Kidney (tissue), 22 donors: ENCODE measurements at regions of chr11 and their contacts with region 1.

Region 1: DNA sequence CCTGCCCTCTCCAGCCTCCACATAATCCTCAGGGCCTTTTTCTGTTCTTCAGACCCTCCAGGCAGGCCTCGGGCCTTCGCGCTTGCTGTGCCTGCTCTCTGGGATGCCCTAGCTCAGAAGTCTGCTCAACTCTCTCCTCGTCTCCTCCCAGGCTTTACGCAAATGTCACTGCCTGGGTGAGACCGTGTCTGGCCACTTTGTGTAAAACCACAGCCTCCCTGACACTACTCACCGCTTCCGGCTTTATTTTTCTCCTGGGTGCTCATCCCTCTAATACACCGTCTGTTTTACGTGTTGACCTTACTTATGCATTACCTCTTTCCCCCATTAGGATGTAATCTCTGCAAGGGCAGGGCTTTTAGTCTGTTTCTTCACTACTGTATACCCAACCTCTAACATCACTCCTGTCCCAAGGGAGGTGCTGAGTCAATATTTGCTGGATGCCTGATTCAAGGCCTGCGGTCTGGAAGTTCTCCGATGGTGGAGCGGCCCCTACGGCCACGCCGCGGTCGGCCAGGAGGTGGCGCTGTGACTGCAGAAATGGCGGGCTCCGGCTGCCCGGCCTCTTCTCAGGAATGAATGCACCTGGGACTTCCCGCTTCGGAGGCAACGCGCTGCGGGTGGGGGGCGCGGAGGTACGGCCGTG is 58.2 kb upstream of the THY1 start:
- DNase-seq: peak; percentile 73 to 90 (median 80)
- H3K4me3 ChIP-seq: peak overlapping the region in 1 of 3 donors; percentile 15
- H3K27ac ChIP-seq: no peak overlapping the region
- H3K4me1 ChIP-seq: no peaks in the 10 kb centered on the region
- H3K27me3 ChIP-seq: no peaks in the 10 kb centered on the region
- CTCF ChIP-seq: peak; percentile 97

Region 2: DNA sequence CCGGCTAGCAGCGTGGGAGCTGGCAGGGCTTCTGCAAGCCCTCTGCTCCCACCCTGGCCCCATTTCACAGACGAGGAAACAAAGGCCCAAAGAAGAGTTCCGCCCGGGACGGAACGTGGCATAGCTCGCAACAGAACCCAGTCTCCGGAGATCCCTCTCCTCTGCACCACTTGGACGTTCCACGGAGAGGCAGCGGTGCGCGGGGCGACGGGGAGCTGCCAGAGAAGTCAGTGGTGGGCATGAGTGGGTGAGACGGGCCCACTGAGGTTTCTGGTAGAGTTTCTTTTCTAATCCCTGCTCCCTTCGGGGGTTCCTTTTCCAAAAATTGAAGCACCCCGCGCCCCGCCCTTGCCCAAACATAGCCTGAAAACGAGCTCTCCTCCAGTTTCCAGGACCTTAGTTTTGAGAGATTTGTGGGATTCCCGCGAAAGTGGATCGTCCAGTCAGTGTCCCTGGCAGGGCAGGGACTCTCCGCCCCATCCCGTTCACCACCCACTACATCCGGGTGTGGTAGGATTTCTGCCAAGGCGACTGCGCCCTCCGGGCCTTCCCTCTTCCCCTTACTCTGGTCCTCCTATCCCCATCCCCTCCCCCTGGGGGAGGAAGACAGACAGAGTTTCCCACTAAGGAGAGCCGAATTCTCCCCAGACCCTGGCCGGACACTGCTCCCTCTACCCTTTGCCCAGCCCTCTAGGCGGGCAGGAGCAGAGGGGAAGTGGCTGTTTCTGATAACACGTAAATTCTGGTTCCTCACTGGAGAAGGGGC is 248.6 kb after region 1 on chr11:
- intact Hi-C with region 1: loop called (anchors 10 kb)
- DNase-seq: peak in 2 of 5 donors; percentile 53 to 91
- H3K4me3 ChIP-seq: peak overlapping the region; percentile 33 to 65 (median 59)
- H3K27ac ChIP-seq: peak overlapping the region; percentile 48 to 51
- H3K4me1 ChIP-seq: peaks cover 3 to 12% (median 7%) of the 10 kb centered on the region in 3 donors
- H3K27me3 ChIP-seq: no peaks in the 10 kb centered on the region
- CTCF ChIP-seq: no peak